Right cardiac atrium (tissue), 5 donors: ENCODE measurements at regions of chr6 and their contacts with region 1.

Region 1: DNA sequence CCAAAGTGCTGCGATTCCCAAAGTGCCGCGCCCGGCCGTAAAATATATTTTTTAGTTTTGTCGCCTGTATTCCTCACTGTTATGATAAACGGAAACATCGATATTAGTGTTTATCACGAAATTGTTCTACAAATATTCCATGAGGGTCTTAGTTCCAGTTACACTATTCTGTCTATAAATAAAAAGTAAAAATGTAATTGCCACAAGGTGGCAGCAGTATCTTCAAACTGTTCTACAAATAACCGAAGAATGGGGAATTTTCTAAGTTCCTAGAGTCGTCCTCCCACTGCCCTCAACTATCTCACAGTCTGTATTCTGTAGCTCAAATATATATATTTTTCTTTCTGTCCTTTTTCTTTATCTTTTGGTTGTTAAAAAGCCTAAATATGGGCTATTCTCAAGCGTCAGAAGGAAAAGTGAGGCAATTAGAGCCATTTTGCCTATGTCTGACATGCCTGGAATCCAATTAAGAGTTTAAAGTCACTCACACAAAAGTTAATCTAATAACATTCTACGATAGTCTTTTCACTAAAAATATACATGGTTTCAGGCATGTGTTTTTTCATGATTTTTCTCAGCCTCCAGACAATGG is 14.2 kb upstream of the FAM162B start:
- DNase-seq: no peak
- ATAC-seq: no peak
- H3K4me3 ChIP-seq: no peak overlapping the region
- H3K27ac ChIP-seq: no peak overlapping the region
- H3K4me1 ChIP-seq: no peaks in the 10 kb centered on the region
- H3K27me3 ChIP-seq: no peaks in the 10 kb centered on the region

Region 2: DNA sequence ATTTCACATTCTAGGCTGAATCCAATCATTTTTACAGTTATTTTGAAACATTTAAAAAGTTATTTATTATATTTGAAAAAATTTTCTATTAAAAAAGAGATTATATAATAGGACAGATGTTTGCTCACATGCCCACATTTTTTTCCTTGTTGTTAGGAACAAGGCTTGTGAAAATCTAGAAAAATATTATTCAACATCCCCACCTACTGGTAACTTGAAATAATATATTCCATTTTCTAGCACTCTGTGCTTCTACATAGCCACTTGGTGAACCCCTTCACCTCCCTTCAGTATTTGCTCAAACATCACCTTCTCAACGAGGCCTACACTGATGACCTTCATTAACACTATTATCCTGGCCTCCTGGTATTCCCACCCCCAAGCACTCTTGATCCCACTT is 67.6 kb after region 1 on chr6:
- intact Hi-C with region 1: loop called in 1 of 4 experiments (anchors 10 kb)
- DNase-seq: no peak
- ATAC-seq: no peak
- H3K4me3 ChIP-seq: no peak overlapping the region
- H3K27ac ChIP-seq: no peak overlapping the region
- H3K4me1 ChIP-seq: no peaks in the 10 kb centered on the region
- H3K27me3 ChIP-seq: no peaks in the 10 kb centered on the region

Region 3: GRCh38 chr6:116954938-116955337 is 175.3 kb after region 1 on chr6:
- intact Hi-C with region 1: loop called in 1 of 4 experiments (anchors 10 kb)
- DNase-seq: no peak
- ATAC-seq: no peak
- H3K4me3 ChIP-seq: no peak overlapping the region
- H3K27ac ChIP-seq: no peak overlapping the region
- H3K4me1 ChIP-seq: no peaks in the 10 kb centered on the region
- H3K27me3 ChIP-seq: no peaks in the 10 kb centered on the region